Common myeloid progenitor, CD34-positive (primary cell): ENCODE measurements at regions of chr13 and their contacts with region 1.

Region 1: DNA sequence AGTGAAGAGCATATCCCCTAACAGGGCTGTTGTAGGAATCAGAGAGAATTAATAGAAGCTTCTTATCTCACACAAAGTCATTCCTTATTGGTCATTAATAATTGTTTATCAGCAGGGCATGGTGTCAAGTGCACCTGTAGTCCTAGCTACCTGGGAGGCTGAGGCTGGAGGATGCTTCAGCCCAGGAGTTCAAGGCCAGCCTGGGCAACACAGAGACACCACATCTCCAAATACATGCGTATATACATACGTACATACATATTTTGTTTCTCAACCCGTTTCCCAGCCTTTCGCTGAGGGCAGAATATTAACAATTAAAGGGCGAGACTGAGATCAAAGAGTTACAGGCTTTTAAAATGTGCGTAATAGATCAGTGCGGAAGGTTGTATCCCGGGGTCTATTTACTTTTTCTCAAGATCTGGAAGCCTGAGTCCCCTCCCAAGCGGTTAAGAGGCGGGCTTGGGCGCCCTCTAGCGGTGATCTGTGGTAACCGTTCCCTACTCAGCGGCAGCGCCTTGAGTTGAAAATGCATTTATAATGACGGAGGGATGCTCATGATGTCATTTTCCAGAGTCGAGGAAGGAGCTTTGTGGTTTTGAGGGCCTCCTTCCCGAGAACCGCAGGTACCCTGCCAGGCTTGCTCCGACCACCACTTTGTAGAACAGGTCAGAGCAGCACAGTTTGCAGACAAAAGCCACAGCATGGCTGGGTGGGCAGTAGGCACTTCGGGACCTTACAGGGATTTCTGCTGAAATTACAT is 169.6 kb upstream of the GPR12 start:
- DNase-seq: peak; percentile 67 to 75 (median 72)
- H3K4me3 ChIP-seq: no peak overlapping the region
- H3K27ac ChIP-seq: no peak overlapping the region
- H3K4me1 ChIP-seq: peaks cover 0 to 5% (median 2%) of the 10 kb centered on the region in 4 experiments
- H3K27me3 ChIP-seq: peaks cover 0 to 4% (median 0%) of the 10 kb centered on the region in 5 experiments

Region 2: DNA sequence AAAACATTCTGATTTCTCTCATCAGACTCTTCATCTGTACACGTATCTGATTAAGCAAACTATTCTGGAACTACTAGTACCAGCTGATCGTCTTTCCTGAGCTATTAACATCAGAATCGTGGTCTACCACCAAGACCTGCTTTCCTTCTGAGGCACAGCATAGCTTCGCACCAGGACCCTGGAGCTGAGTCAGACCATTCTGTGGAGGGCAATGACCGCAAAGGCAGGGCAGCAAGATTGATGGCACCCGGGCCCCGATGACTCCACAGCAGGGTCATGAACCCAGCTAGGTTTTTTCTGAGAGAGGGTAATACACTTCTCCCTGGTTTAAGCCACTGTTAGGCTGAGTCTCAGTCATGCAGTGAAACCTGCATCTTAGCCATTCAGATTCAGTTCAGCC is 10.8 kb before region 1 on chr13:
- CTCF ChIA-PET with region 1: interaction called, 13 read pairs
- POLR2A ChIA-PET with region 1: no interaction called
- DNase-seq: peak in 1 of 3 donors; percentile 4
- H3K4me3 ChIP-seq: no peak overlapping the region
- H3K27ac ChIP-seq: no peak overlapping the region
- H3K4me1 ChIP-seq: peaks cover 0 to 14% (median 10%) of the 10 kb centered on the region in 4 experiments
- H3K27me3 ChIP-seq: peaks cover 0 to 13% (median 0%) of the 10 kb centered on the region in 5 experiments

Region 3: DNA sequence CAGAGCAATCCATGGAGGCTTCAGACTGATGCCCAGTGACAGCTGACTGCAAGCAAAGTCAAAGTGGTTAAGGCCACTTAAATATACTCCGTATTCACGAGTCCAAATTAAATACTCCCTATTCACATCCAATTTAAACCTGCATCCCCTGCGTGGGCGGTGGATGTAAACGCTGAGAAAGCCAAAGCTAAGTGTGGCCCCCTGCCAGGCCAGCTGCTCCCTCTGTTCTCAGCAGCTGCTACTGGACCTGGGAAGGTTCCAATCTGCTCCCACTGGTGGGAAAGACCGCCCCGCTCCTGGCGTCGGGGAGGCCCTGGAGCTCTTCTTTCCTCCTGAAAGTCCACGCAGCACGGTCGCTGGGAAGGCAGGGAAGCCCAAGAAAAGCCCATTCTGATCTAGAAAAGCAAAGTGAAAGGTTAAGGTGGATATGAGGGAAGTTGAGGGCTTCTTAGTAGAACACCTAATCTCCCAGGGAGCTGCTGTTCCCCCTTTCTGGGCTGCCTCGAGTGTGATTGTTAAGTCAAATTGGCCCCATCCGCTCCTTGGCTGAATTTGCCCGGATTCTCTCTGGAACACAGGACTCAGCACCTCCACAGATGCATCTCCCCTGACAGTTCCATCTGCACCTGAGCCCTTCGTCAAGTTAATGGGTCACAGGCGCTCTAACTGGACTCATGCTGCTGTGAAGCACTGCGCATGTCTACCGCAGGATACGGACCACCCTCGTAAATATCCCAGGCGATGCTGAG is 36.0 kb after region 1 on chr13:
- CTCF ChIA-PET with region 1: no interaction called
- POLR2A ChIA-PET with region 1: no interaction called
- DNase-seq: no peak
- H3K4me3 ChIP-seq: no peak overlapping the region
- H3K27ac ChIP-seq: no peak overlapping the region
- H3K4me1 ChIP-seq: peaks cover 0 to 8% (median 5%) of the 10 kb centered on the region in 4 experiments
- H3K27me3 ChIP-seq: no peaks in the 10 kb centered on the region

Region 4: DNA sequence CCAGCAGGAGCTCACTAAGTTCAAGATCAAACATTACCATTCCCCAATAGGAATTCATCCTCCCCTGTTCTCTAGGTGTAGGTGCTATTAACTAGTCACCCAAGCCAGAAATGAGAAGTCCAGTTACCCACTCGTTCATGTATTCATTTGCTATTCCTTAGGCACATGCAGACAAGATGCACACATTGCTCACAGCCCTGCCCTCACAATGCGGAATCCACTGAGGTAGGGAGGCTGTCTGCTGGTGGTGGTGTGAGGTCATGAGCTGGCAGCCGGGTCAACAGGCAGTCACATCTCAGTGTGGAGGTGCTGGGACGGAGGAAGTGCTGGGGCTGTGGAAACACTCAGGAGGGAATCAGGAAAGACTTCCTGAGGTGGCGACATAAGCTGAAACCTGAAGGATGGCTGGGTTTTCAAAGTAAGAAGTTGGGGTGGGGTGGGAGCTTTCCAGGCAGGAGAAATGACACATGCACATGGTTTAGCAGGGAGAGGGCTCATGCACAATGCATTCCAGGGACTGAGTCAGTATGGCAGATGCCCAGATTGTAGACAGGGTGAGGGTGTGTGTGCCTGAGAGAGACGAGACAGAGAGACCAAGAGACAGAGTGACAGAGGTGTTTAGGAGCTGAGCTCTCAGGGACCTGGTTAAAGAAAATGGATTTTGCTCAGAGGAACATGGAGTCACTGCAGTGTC is 123.9 kb after region 1 on chr13:
- CTCF ChIA-PET with region 1: no interaction called
- POLR2A ChIA-PET with region 1: no interaction called
- DNase-seq: no peak
- H3K4me3 ChIP-seq: no peak overlapping the region
- H3K27ac ChIP-seq: no peak overlapping the region
- H3K4me1 ChIP-seq: peaks cover 0 to 21% (median 10%) of the 10 kb centered on the region in 4 experiments
- H3K27me3 ChIP-seq: no peaks in the 10 kb centered on the region